ENCODE measurements at regions of chr3 and their contacts with region 1.

Region 1: GRCh38 chr3:143963946-143964345 is 7.7 kb upstream of the DIPK2A start:
- DNase-seq: no peak
- H3K4me3 ChIP-seq: no peak overlapping the region
- H3K27ac ChIP-seq: no peak overlapping the region
- H3K4me1 ChIP-seq: no peaks in the 10 kb centered on the region
- H3K27me3 ChIP-seq: no peaks in the 10 kb centered on the region
- CTCF ChIP-seq: no peak
- POLR2A ChIP-seq: no peak

Region 2: DNA sequence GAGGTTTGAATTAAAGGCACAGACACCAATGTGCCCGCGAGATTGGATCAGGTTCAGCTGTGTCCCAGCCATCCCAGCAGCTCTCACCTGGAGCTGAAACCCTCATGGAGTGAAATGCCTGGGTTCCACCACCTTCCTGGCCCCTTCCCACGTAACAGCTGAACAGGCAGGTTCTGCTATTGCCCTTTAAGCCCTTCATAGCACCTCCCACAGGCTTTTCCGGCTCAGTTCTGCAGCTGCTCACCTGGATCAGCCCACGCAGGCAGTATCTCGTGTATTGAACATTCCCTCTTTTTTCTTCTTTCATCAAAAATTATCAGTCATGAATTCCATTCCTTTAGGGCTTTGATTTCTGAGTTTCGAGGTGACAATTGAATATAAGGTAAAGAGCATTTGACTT is 245.5 kb before region 1 on chr3:
- intact Hi-C with region 1: loop called (anchors 5 kb)
- DNase-seq: peak; percentile 33 to 38
- H3K4me3 ChIP-seq: no peak overlapping the region
- H3K27ac ChIP-seq: no peak overlapping the region
- H3K4me1 ChIP-seq: no peaks in the 10 kb centered on the region
- H3K27me3 ChIP-seq: no peaks in the 10 kb centered on the region
- CTCF ChIP-seq: no peak
- POLR2A ChIP-seq: no peak

Region 3: GRCh38 chr3:143839980-143840379 is 124.0 kb before region 1 on chr3:
- intact Hi-C with region 1: no loop called
- DNase-seq: no peak
- H3K4me3 ChIP-seq: no peak overlapping the region
- H3K27ac ChIP-seq: no peak overlapping the region
- H3K4me1 ChIP-seq: no peaks in the 10 kb centered on the region
- H3K27me3 ChIP-seq: no peaks in the 10 kb centered on the region
- CTCF ChIP-seq: no peak
- POLR2A ChIP-seq: no peak